RWPE1 (cell line): ENCODE measurements at regions of chr12 and their contacts with region 1.

Region 1: GRCh38 chr12:49322708-49323523 is at the start of gene TROAP:
- DNase-seq: peak; percentile 100
- H3K27ac ChIP-seq: peak within 1 kb of the TSS; percentile 78
- CTCF ChIP-seq: no peak

Region 2: GRCh38 chr12:49161092-49161795 is 161.7 kb before region 1 on chr12:
- CTCF ChIA-PET with region 1: no interaction called
- POLR2A ChIA-PET with region 1: no interaction called
- DNase-seq: no peak
- H3K27ac ChIP-seq: no peak overlapping the region
- CTCF ChIP-seq: no peak

Region 3: GRCh38 chr12:49260166-49260565 is 62.8 kb before region 1 on chr12:
- CTCF ChIA-PET with region 1: no interaction called
- POLR2A ChIA-PET with region 1: no interaction called
- DNase-seq: no peak
- H3K27ac ChIP-seq: peak overlapping the region; percentile 76; the same call in 1 of the 2 replicates
- CTCF ChIP-seq: no peak

Region 4: DNA sequence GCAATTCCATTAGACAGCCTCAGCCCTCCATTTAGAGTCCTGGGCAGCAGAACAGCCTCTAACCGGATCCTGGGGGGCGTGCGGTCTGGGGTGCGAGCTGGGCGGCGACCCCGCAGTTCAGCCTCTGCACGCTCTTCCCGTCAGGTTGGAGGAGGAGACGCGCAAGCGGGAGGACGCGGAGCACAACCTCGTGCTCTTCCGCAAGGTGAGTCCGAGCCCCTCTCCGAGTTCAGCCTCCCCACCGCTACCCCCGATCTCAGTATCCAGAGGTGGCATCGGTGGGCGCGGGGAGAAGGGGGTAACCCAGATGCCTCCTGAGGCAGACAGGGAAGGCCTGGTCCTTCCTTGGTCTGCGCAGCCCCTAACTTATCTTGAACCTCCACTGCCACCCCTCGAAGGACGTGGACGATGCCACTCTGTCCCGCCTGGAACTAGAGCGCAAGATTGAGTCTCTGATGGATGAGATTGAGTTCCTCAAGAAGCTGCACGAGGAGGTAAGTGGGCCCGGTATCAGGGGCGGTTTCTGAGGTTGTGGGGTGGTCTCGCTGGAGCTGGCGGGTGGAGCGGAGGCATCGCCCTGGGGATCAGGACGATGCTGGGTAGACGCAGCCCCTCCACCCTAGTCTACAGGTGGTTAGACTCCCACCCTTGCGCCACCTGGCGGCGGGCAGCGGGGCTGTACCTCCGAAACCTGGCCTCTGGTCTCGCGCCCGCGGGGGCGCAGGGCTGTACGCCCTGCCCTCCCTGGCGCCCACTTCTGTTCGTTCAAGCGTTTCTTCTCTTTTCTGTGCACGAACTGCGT is 26.7 kb before region 1 on chr12:
- CTCF ChIA-PET with region 1: interaction called, 15 read pairs
- POLR2A ChIA-PET with region 1: no interaction called
- DNase-seq: peak; percentile 70
- H3K27ac ChIP-seq: no peak overlapping the region
- CTCF ChIP-seq: peak; percentile 85